Activated T-helper 2 cell treated with anti-CD3 and anti-CD28 coated beads, Interferon-gamma antibody, Interleukin-2, Interleukin-4, amounts not matched to agents 10 μg/mL and 5 μg/mL and 100 μg/mL, durations not matched to agents 14 hours and 24 hours and 36 hours (primary cell): ENCODE measurements at regions of chr5 and their contacts with region 1.

Region 1: GRCh38 chr5:95664204-95664786 is 17.7 kb downstream of the RFESD start:
- DNase-seq: no peak
- H3K4me3 Mint-ChIP-seq: no peak overlapping the region
- H3K27ac Mint-ChIP-seq: no peak overlapping the region
- H3K4me1 Mint-ChIP-seq: peaks cover 3% of the 10 kb centered on the region
- H3K27me3 Mint-ChIP-seq: peaks cover 16% of the 10 kb centered on the region

Region 2: DNA sequence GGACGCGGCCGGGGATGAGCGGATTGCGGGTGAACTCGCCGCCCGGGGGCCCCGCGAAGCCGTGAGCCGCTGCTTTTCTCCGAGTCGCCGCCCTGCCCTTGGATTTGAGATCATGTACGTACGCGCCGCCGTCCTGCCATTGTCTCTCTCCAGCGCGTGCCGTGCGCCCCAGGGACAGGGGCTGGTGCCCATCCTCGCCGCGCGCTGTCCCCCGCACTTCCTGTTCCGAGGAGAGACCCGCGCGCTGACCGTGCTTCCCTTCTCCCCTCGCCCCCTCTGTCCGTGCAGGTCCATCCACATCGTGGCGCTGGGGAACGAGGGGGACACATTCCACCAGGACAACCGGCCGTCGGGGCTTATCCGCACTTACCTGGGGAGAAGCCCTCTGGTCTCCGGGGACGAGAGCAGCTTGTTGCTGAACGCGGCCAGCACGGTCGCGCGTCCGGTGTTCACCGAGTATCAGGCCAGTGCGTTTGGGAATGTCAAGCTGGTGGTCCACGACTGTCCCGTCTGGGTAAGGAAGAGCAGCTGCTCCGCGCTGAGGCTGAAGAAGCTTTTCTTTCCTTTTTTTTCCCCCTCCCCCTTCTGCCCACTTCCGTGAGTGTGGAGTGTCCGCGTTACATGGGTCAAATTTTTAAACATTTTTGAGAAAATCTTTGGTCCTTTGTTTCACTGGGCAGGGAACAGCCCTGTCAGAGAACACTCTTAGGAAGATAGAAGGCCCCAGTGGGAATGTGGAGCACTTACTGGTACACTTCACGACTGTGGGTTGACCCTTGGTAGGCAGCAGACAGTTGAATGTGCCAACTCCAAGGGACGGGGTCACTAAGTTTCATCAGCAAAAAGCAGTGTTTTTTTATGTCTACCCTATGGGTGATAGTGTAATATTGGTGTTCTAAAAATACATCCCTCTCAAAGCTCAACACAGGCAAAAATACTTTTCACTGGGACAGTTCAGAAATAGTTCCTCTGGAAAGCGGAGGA is 67.6 kb after region 1 on chr5:
- intact Hi-C with region 1: loop called (anchors 2 kb)
- DNase-seq: no peak
- H3K4me3 Mint-ChIP-seq: peak overlapping the region; percentile 76
- H3K27ac Mint-ChIP-seq: no peak overlapping the region
- H3K4me1 Mint-ChIP-seq: peaks cover 18% of the 10 kb centered on the region
- H3K27me3 Mint-ChIP-seq: peaks cover 80% of the 10 kb centered on the region

Region 3: GRCh38 chr5:95760273-95761191 is 96.2 kb after region 1 on chr5:
- intact Hi-C with region 1: loop called (anchors 1 kb)
- DNase-seq: no peak
- H3K4me3 Mint-ChIP-seq: peak overlapping the region; percentile 51
- H3K27ac Mint-ChIP-seq: peak overlapping the region; percentile 58
- H3K4me1 Mint-ChIP-seq: peaks cover 28% of the 10 kb centered on the region
- H3K27me3 Mint-ChIP-seq: peaks cover 58% of the 10 kb centered on the region

Region 4: DNA sequence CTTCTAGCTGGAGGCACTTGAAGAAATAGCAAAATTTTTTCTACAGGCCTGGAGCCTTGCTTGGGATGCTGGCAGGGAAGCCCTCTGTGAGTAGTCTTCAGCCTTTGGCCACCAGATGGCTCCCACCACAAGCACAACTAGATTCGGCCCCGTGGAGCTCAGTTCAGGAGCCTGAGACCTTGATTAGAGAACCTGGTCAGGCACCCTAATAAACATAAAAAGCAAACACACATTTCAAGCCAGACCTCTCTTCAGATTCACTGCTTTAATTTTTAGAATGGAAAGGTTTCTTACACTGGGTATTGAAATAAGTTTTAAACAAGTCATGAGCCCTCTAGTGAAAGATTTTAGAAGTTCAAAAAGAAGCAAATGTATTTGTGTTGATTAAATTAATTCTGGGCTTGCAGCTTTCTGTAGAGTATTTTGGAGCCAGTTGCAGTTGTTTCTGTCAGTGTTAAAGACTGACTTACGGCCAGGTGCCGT is 116.8 kb after region 1 on chr5:
- intact Hi-C with region 1: loop called (anchors 2 kb)
- DNase-seq: peak; percentile 52
- H3K4me3 Mint-ChIP-seq: peak overlapping the region; percentile 41
- H3K27ac Mint-ChIP-seq: no peak overlapping the region
- H3K4me1 Mint-ChIP-seq: peaks cover 19% of the 10 kb centered on the region
- H3K27me3 Mint-ChIP-seq: peaks cover 7% of the 10 kb centered on the region

Region 5: GRCh38 chr5:96008987-96009647 is 344.8 kb after region 1 on chr5:
- intact Hi-C with region 1: no loop called
- DNase-seq: no peak
- H3K4me3 Mint-ChIP-seq: no peak overlapping the region
- H3K27ac Mint-ChIP-seq: no peak overlapping the region
- H3K4me1 Mint-ChIP-seq: no peaks in the 10 kb centered on the region
- H3K27me3 Mint-ChIP-seq: no peaks in the 10 kb centered on the region

Region 6: DNA sequence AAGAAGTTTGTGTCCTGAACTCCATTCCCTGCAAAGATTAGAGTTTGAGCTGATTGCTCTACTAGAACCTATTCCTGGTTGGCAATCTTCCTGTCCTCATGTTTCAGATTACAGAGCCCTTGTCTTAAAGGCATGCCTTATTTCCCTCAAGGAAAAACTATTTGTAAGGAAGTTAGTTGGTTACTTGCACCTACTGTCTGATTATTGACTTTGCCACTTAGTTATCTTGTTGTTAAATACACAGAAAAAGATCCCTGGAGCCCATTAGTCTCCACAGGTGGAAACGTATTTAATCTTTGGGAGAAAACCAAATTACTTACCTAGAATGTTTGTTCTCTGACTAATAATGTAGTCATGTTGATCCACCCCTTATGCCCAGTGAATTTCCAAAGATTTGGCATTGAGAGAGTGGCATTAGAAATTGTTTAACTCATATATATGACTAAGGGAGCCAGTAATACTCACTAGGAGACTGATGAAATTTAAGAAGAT is 429.6 kb after region 1 on chr5:
- intact Hi-C with region 1: no loop called
- DNase-seq: no peak
- H3K4me3 Mint-ChIP-seq: no peak overlapping the region
- H3K27ac Mint-ChIP-seq: no peak overlapping the region
- H3K4me1 Mint-ChIP-seq: no peaks in the 10 kb centered on the region
- H3K27me3 Mint-ChIP-seq: no peaks in the 10 kb centered on the region